ENCODE measurements at regions of chr1 and their contacts with region 1.

Region 1: GRCh38 chr1:193143285-193143684 is 21.5 kb downstream of the CDC73 start:
- DNase-seq: peak in 2 of 5 donors; percentile 16 to 20
- H3K4me3 ChIP-seq: no peak overlapping the region
- H3K4me3 Mint-ChIP-seq: no peak overlapping the region
- H3K27ac ChIP-seq: no peak overlapping the region
- H3K27ac Mint-ChIP-seq: peak overlapping the region in 1 of 7 donors; percentile 8
- H3K4me1 ChIP-seq: peaks cover 9% of the 10 kb centered on the region
- H3K4me1 Mint-ChIP-seq: peaks cover 15 to 38% (median 30%) of the 10 kb centered on the region in 4 donors
- H3K27me3 ChIP-seq: no peaks in the 10 kb centered on the region
- H3K27me3 Mint-ChIP-seq: no peaks in the 10 kb centered on the region

Region 2: DNA sequence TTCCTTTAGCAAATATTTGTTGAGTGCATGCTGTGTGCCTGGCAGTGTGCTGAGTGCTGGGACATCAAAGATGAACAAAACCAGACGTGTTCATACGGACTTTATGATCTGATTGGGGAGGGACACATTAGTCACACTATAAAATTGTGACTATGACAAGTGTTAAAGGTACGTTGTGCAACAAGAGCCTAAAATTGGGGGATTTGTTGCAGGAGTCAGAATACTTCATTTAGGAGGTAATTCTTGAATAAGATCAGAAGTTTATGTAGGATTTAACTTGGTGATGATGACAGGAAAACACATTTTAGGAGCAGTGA is 13.5 kb after region 1 on chr1:
- CTCF ChIA-PET with region 1: no interaction called
- POLR2A ChIA-PET with region 1: no interaction called
- intact Hi-C with region 1: loop called (anchors 2 kb)
- DNase-seq: no peak
- H3K4me3 ChIP-seq: no peak overlapping the region
- H3K4me3 Mint-ChIP-seq: no peak overlapping the region
- H3K27ac ChIP-seq: no peak overlapping the region
- H3K27ac Mint-ChIP-seq: peak overlapping the region in 4 of 7 donors; percentile 2 to 47 (median 20)
- H3K4me1 ChIP-seq: peaks cover 5% of the 10 kb centered on the region
- H3K4me1 Mint-ChIP-seq: peaks cover 28 to 38% (median 32%) of the 10 kb centered on the region in 4 donors
- H3K27me3 ChIP-seq: no peaks in the 10 kb centered on the region
- H3K27me3 Mint-ChIP-seq: no peaks in the 10 kb centered on the region

Region 3: DNA sequence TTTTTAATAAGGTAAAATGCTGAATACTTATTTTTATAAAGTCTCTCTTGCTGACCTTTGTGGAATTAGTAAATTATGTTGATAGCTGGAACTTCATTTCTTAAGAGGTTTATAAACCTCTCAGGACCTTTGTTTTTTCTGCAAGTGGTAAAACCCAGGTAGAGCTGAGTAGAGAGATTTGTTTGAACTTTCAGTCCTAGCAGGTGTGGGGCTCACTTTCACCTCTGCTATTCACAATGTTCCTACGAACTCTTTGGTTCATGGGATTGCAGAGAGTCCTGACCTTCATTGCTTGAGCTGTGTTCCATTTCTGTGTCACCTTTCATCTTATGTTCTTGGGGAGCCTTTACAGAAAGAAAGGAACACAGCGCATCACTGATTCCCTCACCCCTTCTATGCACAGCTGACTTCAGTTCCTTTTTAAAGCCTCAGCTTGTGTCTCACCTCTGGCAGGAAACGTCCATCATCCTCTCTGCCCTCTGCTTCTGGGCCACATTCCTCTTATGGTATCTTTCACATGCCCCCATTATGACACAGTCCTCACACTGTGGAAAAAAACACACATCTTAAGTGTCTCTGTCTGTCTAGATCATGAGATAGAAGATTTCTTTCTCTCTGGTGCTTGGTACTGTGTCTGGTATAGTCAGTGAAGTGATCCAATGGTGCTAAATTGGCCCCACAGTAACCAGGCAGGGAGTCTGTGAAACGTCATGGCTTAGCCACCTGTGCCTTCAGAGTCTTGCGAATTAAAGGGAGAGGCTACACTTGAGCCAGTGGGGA is 305.6 kb after region 1 on chr1:
- CTCF ChIA-PET with region 1: no interaction called
- POLR2A ChIA-PET with region 1: no interaction called
- intact Hi-C with region 1: no loop called
- DNase-seq: peak; percentile 39 to 67 (median 41)
- H3K4me3 ChIP-seq: no peak overlapping the region
- H3K4me3 Mint-ChIP-seq: peak overlapping the region in 7 of 8 donors; percentile 1 to 53 (median 9)
- H3K27ac ChIP-seq: peak overlapping the region; percentile 36
- H3K27ac Mint-ChIP-seq: peak overlapping the region; percentile 68 to 95 (median 82)
- H3K4me1 ChIP-seq: peaks cover 18% of the 10 kb centered on the region
- H3K4me1 Mint-ChIP-seq: peaks cover 16 to 23% (median 18%) of the 10 kb centered on the region in 4 donors
- H3K27me3 ChIP-seq: no peaks in the 10 kb centered on the region
- H3K27me3 Mint-ChIP-seq: no peaks in the 10 kb centered on the region